ENCODE measurements at regions of chr9 and their contacts with region 1.

Region 1: DNA sequence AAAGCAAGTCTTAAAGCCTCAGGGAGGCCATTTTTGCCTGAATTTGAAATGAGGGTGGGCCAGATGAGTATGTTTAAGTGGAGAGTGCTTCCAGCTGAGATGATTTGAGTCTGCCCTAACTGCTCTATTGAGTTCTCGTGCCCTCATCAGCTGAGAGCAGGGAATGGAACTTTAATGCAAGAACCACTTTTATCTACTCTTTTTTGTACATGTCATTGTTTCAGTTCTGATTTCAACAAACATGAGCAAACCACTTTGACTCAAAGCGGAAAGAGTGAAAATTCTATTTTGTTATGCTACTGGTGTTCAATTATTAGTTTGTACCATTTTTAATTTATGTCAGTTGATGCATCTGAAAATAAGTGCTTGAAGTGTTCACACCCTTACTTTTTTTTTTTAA is 35.8 kb downstream of the DCAF10 start:
- DNase-seq: peak; percentile 31
- H3K4me3 Mint-ChIP-seq: no peak overlapping the region
- H3K27ac Mint-ChIP-seq: no peak overlapping the region
- H3K4me1 Mint-ChIP-seq: peaks cover 11% of the 10 kb centered on the region
- H3K27me3 Mint-ChIP-seq: no peaks in the 10 kb centered on the region

Region 2: GRCh38 chr9:37784616-37785483 is 51.5 kb before region 1 on chr9 and contains the start of gene EXOSC3:
- CTCF ChIA-PET with region 1: no interaction called
- POLR2A ChIA-PET with region 1: no interaction called
- intact Hi-C with region 1: loop called (anchors 10 kb)
- DNase-seq: peak; percentile 93
- H3K4me3 Mint-ChIP-seq: peak within 1 kb of the TSS; percentile 98
- H3K27ac Mint-ChIP-seq: peak within 1 kb of the TSS; percentile 93
- H3K4me1 Mint-ChIP-seq: peaks cover 38% of the 10 kb centered on the region
- H3K27me3 Mint-ChIP-seq: no peaks in the 10 kb centered on the region
- total RNA-seq, gene EXOSC3: 97.5 to 97.9 TPM

Measured in activated CD4-positive, alpha-beta memory T cell treated with anti-CD3 and anti-CD28 coated beads for 36 hours (primary cell).